PC-9 (cell line): ENCODE measurements at regions of chr13 and their contacts with region 1.

Region 1: GRCh38 chr13:49443704-49444523 is at the starts of genes CAB39L and SETDB2:
- DNase-seq: peak; percentile 97 to 99
- H3K4me3 ChIP-seq: peak within 1 kb of the TSS; percentile 77
- H3K27ac ChIP-seq: peak within 1 kb of the TSS; percentile 71
- H3K4me1 ChIP-seq: peaks cover 6% of the 10 kb centered on the region; the same call in 1 of the 2 replicates
- H3K27me3 ChIP-seq: no peaks in the 10 kb centered on the region
- CTCF ChIP-seq: peak; percentile 35; the same call in 1 of the 2 replicates
- total RNA-seq, gene CAB39L: 10.2 and 10.7 TPM in 2 replicates
- total RNA-seq, gene SETDB2: 5.2 and 6.9 TPM in 2 replicates

Region 2: DNA sequence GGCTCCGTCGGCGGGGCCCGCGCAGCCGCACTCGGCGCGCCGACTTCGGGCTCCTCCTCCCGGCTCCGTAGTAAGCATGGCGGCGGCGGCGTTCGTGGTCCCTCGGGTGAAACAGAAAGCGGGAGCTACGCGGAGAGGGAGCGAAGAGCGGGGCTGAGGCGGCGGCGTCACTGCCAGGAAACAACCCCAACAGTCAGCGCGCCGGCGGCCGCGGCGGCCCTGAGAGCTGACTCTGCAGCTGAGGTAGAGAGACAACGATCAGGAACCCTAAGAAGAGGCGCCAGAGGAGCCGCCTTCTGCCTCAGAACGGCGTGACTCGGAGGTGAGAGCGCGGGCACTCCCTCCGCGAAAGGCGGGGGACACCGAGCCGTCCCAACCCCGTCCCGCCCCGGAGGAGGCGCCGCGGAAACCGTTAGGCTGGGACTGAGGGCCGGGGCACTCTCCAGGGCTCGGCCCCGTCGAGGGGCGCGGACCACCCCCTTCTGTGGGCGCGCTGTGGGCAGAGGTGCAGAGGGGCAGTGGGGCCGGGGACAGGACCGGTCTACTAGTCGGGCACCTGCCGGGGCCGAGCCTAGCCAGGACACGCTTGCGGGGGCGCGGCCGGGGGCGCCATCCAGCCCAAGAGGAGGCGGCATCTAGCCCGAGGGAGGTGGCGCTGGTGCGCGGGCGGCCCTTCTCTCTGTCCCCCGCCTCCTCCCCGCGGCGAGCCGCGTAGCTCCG is 467.9 kb before region 1 on chr13 and contains the start of gene FNDC3A:
- CTCF ChIA-PET with region 1: no interaction called
- POLR2A ChIA-PET with region 1: interaction called, 12 read pairs
- intact Hi-C with region 1: no loop called
- DNase-seq: peak; percentile 67 to 89
- H3K4me3 ChIP-seq: peak within 1 kb of the TSS; percentile 59
- H3K27ac ChIP-seq: peak within 1 kb of the TSS; percentile 84
- H3K4me1 ChIP-seq: peaks cover 20% of the 10 kb centered on the region
- H3K27me3 ChIP-seq: no peaks in the 10 kb centered on the region
- CTCF ChIP-seq: no peak
- total RNA-seq, gene FNDC3A: 29.7 and 34.3 TPM in 2 replicates

Region 3: GRCh38 chr13:49110122-49110912 is 333.6 kb before region 1 on chr13:
- CTCF ChIA-PET with region 1: no interaction called
- POLR2A ChIA-PET with region 1: interaction called, 6 read pairs
- intact Hi-C with region 1: loop called (anchors 5 kb)
- DNase-seq: peak; percentile 65 to 82
- H3K4me3 ChIP-seq: peak overlapping the region; percentile 71
- H3K27ac ChIP-seq: peak overlapping the region; percentile 71
- H3K4me1 ChIP-seq: peaks cover 32% of the 10 kb centered on the region
- H3K27me3 ChIP-seq: no peaks in the 10 kb centered on the region
- CTCF ChIP-seq: no peak

Region 4: DNA sequence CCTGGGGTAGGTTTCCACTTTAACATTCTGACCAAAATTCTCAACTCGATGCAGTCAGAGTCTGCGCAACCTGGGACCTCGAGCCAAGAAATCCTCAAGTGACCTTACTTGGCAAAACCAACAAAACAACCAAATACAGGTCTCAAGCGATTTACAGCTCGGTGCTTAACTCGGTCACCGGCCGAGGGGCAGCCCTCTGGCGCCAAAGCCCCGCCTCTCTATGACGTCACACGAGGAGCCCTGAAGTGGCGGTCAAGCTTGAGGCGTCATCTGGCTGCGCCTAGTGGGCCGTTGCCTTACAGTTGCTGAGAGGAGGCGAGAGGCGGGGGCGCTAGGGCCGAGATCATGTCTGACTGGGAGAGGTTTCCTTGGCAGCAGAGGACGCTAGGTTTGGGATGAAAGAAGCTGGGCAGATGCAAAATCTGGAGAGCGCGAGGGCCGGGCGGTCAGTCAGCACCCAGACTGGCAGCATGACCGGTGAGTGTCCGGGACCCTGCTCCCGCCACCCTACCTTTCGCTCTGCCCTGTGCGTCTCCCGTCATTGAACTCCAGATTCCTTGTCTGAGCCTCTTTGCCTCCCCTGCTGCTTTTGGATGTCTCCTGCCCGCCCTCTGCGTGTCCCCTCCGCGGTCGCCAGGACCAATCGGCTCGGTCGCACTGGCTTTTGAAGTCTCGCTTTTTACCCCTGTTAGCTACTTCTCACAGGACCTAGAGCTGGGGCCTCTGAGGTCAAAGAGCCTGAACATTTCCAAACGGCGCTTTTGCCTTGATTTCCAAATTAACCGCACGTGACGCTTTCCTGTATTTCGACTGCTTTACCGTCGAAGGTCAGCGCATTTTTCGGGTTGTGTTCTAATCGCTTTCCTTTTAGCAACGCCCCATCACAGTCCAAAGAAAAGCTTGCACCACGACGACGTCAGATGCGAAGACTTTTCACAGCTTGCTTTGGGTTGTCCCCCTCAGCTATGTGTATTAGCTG is 196.0 kb before region 1 on chr13 and contains the start of gene CDADC1:
- CTCF ChIA-PET with region 1: no interaction called
- POLR2A ChIA-PET with region 1: no interaction called
- intact Hi-C with region 1: loop called (anchors 5 kb)
- DNase-seq: peak; percentile 84 to 93
- H3K4me3 ChIP-seq: peak within 1 kb of the TSS; percentile 76
- H3K27ac ChIP-seq: peak within 1 kb of the TSS; percentile 26; the same call in 1 of the 2 replicates
- H3K4me1 ChIP-seq: peaks cover 13% of the 10 kb centered on the region
- H3K27me3 ChIP-seq: peaks cover 28% of the 10 kb centered on the region
- CTCF ChIP-seq: no peak
- total RNA-seq, gene CDADC1: 12.4 and 12.9 TPM in 2 replicates

Region 5: GRCh38 chr13:49464621-49465325 is 20.9 kb after region 1 on chr13:
- CTCF ChIA-PET with region 1: no interaction called
- POLR2A ChIA-PET with region 1: no interaction called
- intact Hi-C with region 1: no loop called
- DNase-seq: no peak
- H3K4me3 ChIP-seq: no peak overlapping the region
- H3K27ac ChIP-seq: no peak overlapping the region
- H3K4me1 ChIP-seq: no peaks in the 10 kb centered on the region
- H3K27me3 ChIP-seq: no peaks in the 10 kb centered on the region
- CTCF ChIP-seq: no peak

Region 6: GRCh38 chr13:49495783-49496762 is 52.2 kb after region 1 on chr13 and contains the start of gene PHF11:
- CTCF ChIA-PET with region 1: no interaction called
- POLR2A ChIA-PET with region 1: interaction called, 3 read pairs
- intact Hi-C with region 1: loop called (anchors 2 kb)
- DNase-seq: peak; percentile 67 to 68
- H3K4me3 ChIP-seq: peak within 1 kb of the TSS; percentile 64
- H3K27ac ChIP-seq: peak within 1 kb of the TSS; percentile 72
- H3K4me1 ChIP-seq: peaks cover 15% of the 10 kb centered on the region
- H3K27me3 ChIP-seq: no peaks in the 10 kb centered on the region
- CTCF ChIP-seq: no peak
- total RNA-seq, gene PHF11: 15.2 and 25.2 TPM in 2 replicates

Region 7: DNA sequence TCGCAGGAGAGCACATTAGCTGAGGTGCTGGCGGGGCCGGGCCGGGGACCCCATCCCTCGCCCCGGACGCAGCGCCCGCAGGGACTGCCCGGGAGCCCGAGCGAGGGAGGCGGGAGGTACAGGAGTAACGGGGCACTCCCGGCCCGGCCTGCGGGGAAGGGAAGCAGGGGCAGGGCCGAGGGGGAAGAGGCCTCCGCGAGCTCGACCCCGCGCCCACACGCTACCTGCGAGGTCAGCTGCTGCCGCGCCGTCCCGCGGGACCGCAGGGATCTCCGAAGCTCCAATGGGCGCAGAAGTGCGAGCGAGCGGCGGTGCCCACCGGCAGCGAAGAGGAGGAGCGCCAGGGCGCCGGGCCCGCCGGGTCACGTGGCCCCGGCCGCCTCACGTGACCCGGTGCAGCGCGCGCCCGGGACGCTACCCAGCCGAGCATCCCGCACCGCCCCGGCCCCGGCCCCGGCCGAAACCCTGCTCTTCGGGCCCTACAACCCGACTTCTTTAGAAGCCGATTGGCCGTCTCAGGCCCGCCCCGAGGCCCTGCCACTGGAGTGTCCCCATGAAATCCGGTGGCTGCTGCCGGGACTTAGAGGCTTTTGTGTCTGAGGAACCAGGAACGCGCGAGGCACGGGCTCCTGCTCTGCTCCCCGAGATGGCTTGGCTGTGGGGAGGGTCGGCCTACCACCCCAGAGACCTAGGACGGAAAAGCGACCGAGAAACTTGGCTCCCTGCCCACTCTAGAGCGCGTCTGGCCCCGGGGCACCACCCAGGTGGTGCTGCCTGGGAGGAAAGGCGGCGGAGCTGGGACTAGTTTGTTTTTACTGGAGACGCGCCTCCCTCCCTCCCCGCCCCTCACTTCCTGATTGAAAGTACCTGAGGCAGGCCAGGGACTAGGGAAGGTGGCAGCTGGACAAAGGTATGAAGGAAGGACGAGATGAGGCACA is 141.6 kb after region 1 on chr13 and contains the start of gene RCBTB1:
- CTCF ChIA-PET with region 1: no interaction called
- POLR2A ChIA-PET with region 1: interaction called, 7 read pairs
- intact Hi-C with region 1: loop called (anchors 1 kb)
- DNase-seq: peak; percentile 51 to 64
- H3K4me3 ChIP-seq: peak within 1 kb of the TSS; percentile 97
- H3K27ac ChIP-seq: peak within 1 kb of the TSS; percentile 48
- H3K4me1 ChIP-seq: peaks cover 33% of the 10 kb centered on the region
- H3K27me3 ChIP-seq: no peaks in the 10 kb centered on the region
- CTCF ChIP-seq: no peak
- total RNA-seq, gene RCBTB1: 14.6 and 16.1 TPM in 2 replicates